Astrocyte of the cerebellum (primary cell): ENCODE measurements at regions of chr18 and their contacts with region 1.

Region 1: GRCh38 chr18:80157708-80158343 is 48.8 kb downstream of the ADNP2 start:
- DNase-seq: peak; percentile 76
- H3K4me3 ChIP-seq: no peak overlapping the region
- CTCF ChIP-seq: peak; percentile 99

Region 2: DNA sequence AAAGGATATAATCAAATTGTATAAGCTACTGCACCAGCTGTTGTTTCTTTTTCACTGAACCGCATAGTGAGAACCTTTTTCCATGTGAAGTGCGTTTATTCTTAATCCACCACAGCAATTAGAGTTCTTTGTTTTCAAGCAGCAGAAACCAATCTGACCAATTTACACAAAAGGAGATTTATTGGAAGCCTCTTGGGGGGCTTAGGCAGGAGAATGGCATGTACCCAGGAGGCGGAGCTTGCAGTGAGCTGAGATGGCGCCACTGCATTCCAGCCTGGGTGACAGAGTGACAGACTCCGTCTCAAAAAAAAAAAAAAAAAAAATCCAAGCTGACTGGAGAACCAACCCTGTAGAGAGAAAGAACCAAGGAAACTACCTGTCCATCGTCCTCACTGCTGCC is 38.7 kb before region 1 on chr18:
- in situ Hi-C with region 1: no loop called
- DNase-seq: no peak
- H3K4me3 ChIP-seq: no peak overlapping the region
- CTCF ChIP-seq: no peak

Region 3: DNA sequence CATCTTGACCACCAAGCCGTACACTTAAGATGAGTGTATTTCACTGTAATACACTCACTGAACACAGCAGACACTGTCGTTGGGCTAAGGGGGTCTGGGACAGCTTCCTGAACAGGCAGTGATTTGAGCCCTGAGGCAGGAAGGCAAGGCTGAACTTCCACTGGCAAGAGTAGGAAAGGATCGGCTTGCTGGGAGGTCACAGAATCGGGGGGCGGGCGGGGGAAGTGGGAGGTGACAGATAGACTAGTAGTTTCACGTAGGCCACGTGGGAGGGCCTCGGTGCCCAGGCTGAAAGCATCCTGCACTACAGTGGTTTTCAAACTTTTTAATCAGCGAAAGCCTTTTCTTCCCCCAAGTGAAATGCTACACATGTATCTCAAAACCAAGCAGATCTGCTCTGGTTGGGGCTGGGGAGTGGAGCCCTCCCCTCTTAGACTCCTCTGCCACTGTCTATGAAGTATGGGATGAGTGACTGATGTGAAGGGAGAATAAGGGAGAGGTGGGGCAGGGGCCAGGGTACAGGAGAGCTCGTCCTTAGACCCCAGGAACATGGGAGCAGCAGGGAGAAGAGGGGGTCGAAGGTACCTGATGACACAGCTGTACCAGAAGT is 80.9 kb after region 1 on chr18:
- in situ Hi-C with region 1: loop called (anchors 5 kb)
- DNase-seq: no peak
- H3K4me3 ChIP-seq: no peak overlapping the region
- CTCF ChIP-seq: no peak